Mammary epithelial cell (primary cell): ENCODE measurements at regions of chr15 and their contacts with region 1.

Region 1: GRCh38 chr15:73908030-73908821 is 18.0 kb upstream of the LOXL1 start:
- DNase-seq: peak; percentile 45
- H3K4me3 ChIP-seq: no peak overlapping the region
- H3K27ac ChIP-seq: no peak overlapping the region
- H3K4me1 ChIP-seq: no peaks in the 10 kb centered on the region
- H3K27me3 ChIP-seq: no peaks in the 10 kb centered on the region
- CTCF ChIP-seq: peak; percentile 90 to 97

Region 2: GRCh38 chr15:73305331-73306211 is 602.7 kb before region 1 on chr15:
- CTCF ChIA-PET with region 1: no interaction called
- dilution Hi-C with region 1: no loop called
- in situ Hi-C with region 1: no loop called
- intact Hi-C with region 1: loop called (anchors 1 kb)
- DNase-seq: peak; percentile 75
- H3K4me3 ChIP-seq: no peak overlapping the region
- H3K27ac ChIP-seq: no peak overlapping the region
- H3K4me1 ChIP-seq: peaks cover 7% of the 10 kb centered on the region
- H3K27me3 ChIP-seq: no peaks in the 10 kb centered on the region
- CTCF ChIP-seq: peak; percentile 77 to 83

Region 3: GRCh38 chr15:73704869-73705645 is 203.2 kb before region 1 on chr15:
- CTCF ChIA-PET with region 1: interaction called, 3 read pairs
- dilution Hi-C with region 1: no loop called
- in situ Hi-C with region 1: no loop called
- intact Hi-C with region 1: loop called (anchors 1 kb)
- DNase-seq: peak; percentile 27
- H3K4me3 ChIP-seq: no peak overlapping the region
- H3K27ac ChIP-seq: no peak overlapping the region
- H3K4me1 ChIP-seq: no peaks in the 10 kb centered on the region
- H3K27me3 ChIP-seq: no peaks in the 10 kb centered on the region
- CTCF ChIP-seq: peak; percentile 71 to 79

Region 4: GRCh38 chr15:73786518-73786917 is 121.7 kb before region 1 on chr15:
- CTCF ChIA-PET with region 1: no interaction called
- dilution Hi-C with region 1: no loop called
- in situ Hi-C with region 1: no loop called
- intact Hi-C with region 1: no loop called
- DNase-seq: no peak
- H3K4me3 ChIP-seq: no peak overlapping the region
- H3K27ac ChIP-seq: no peak overlapping the region
- H3K4me1 ChIP-seq: no peaks in the 10 kb centered on the region
- H3K27me3 ChIP-seq: no peaks in the 10 kb centered on the region
- CTCF ChIP-seq: no peak

Region 5: GRCh38 chr15:73866881-73867410 is 41.3 kb before region 1 on chr15:
- CTCF ChIA-PET with region 1: no interaction called
- dilution Hi-C with region 1: loop called (anchors 5 kb)
- in situ Hi-C with region 1: no loop called
- intact Hi-C with region 1: no loop called
- DNase-seq: no peak
- H3K4me3 ChIP-seq: no peak overlapping the region
- H3K27ac ChIP-seq: no peak overlapping the region
- H3K4me1 ChIP-seq: no peaks in the 10 kb centered on the region
- H3K27me3 ChIP-seq: peaks cover 9% of the 10 kb centered on the region
- CTCF ChIP-seq: no peak

Region 6: DNA sequence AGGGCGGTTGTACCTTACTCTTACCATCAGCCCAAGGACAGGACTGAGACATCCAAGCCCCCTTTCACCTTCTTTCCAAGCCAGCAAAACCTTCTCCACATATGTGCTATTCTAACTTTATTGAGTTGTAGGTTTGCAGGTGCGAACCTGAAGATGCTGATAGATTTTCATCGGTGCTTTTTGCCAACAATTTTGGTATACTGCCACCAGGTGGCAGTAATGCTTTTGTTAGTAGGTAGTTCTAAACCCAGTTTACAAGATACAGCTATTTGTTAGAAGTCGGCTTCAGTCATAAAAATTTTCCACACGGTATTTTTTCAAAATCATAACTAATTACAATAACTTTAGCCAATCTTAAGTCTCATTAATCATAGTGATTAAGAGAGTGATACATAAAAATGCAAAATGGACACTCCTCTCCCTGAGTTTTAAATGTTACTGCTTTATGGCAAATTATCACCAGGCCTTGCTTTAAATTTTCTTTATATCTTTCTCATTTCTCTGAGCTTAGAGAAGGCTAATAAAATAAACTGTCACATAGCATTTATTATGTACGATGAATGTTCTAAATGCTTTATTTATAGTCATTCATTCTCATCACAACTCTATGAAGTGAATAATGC is 34.2 kb before region 1 on chr15:
- CTCF ChIA-PET with region 1: no interaction called
- dilution Hi-C with region 1: loop called (anchors 5 kb)
- in situ Hi-C with region 1: no loop called
- intact Hi-C with region 1: loop called (anchors 1 kb)
- DNase-seq: peak; percentile 25
- H3K4me3 ChIP-seq: no peak overlapping the region
- H3K27ac ChIP-seq: no peak overlapping the region
- H3K4me1 ChIP-seq: no peaks in the 10 kb centered on the region
- H3K27me3 ChIP-seq: peaks cover 3% of the 10 kb centered on the region
- CTCF ChIP-seq: peak; percentile 65 to 66

Region 7: GRCh38 chr15:73950831-73951561 is 42.8 kb after region 1 on chr15:
- CTCF ChIA-PET with region 1: no interaction called
- dilution Hi-C with region 1: no loop called
- in situ Hi-C with region 1: no loop called
- intact Hi-C with region 1: no loop called
- DNase-seq: peak; percentile 78
- H3K4me3 ChIP-seq: no peak overlapping the region
- H3K27ac ChIP-seq: peak overlapping the region; percentile 11
- H3K4me1 ChIP-seq: peaks cover 14% of the 10 kb centered on the region
- H3K27me3 ChIP-seq: no peaks in the 10 kb centered on the region
- CTCF ChIP-seq: peak; percentile 65 to 82